Activated CD4-positive, alpha-beta memory T cell treated with anti-CD3 and anti-CD28 coated beads for 36 hours (primary cell): ENCODE measurements at regions of chr9 and their contacts with region 1.

Region 1: GRCh38 chr9:101566904-101567724 is 27.7 kb downstream of the PPP3R2 start:
- DNase-seq: peak; percentile 58
- H3K4me3 Mint-ChIP-seq: no peak overlapping the region
- H3K27ac Mint-ChIP-seq: no peak overlapping the region
- H3K4me1 Mint-ChIP-seq: peaks cover 52% of the 10 kb centered on the region
- H3K27me3 Mint-ChIP-seq: no peaks in the 10 kb centered on the region

Region 2: DNA sequence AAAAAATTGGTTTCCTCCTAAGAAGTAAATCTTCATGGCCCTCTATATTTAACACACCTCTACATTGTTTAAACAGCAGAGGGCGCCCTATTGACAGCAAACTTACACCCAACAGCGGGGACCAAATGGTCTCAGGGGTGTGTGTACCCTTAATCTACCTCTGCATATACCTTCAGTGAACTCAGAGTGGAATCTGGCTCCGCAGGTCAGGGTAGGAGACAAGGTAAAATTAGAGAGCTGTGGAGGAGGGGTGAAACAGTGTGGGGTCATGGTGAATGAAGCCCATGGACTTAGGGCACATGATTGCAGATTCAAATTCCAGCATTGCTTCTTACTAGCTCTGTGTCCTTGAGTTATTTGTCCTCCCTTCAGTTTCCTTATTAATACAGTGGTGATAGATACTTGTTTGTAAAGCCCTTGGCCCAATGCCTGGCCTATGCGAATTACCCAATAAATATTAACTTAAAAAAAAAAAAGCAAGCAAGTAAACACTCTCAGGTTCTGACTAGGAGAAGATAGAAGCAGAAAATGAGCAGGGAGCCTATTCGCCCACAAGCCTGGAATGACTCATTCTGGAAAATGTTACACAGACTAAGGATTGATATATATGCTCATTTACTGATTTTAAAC is 866.3 kb before region 1 on chr9:
- CTCF ChIA-PET with region 1: no interaction called
- POLR2A ChIA-PET with region 1: no interaction called
- intact Hi-C with region 1: no loop called
- DNase-seq: no peak
- H3K4me3 Mint-ChIP-seq: no peak overlapping the region
- H3K27ac Mint-ChIP-seq: no peak overlapping the region
- H3K4me1 Mint-ChIP-seq: no peaks in the 10 kb centered on the region
- H3K27me3 Mint-ChIP-seq: no peaks in the 10 kb centered on the region

Region 3: GRCh38 chr9:101458955-101459631 is 108.0 kb before region 1 on chr9:
- CTCF ChIA-PET with region 1: interaction called, 4 read pairs
- POLR2A ChIA-PET with region 1: no interaction called
- intact Hi-C with region 1: loop called (anchors 2 kb)
- DNase-seq: no peak
- H3K4me3 Mint-ChIP-seq: no peak overlapping the region
- H3K27ac Mint-ChIP-seq: no peak overlapping the region
- H3K4me1 Mint-ChIP-seq: no peaks in the 10 kb centered on the region
- H3K27me3 Mint-ChIP-seq: peaks cover 7% of the 10 kb centered on the region

Region 4: DNA sequence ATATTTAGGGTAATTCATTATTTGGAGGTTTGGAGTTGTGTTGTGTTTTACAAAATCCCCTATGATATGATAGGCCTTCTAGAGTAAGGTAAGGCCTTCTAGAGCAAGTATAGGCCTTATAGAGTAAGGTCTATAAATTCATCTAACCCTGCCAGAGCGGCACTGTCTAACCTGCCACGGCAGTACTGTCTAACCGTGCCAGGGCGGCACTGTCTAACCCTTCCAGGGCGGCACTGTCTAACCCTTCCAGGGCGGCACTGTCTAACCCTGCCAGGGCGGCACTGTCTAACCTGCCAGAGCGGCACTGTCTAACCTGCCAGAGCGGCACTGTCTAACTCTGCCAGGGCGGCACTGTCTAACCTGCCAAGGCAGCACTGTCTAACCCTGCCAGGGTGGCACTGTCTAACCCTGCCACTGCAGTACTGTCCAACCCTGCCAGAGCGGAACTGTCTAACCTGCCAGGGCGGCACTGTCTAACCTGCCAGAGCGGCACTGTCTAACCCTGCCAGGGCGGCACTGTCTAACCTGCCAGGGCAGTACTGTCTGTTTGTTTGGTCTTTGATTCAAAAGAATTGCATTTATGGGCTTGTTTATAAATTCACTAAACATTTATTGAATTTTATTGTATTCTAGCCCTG is 23.9 kb before region 1 on chr9:
- CTCF ChIA-PET with region 1: no interaction called
- POLR2A ChIA-PET with region 1: no interaction called
- intact Hi-C with region 1: no loop called
- DNase-seq: no peak
- H3K4me3 Mint-ChIP-seq: no peak overlapping the region
- H3K27ac Mint-ChIP-seq: no peak overlapping the region
- H3K4me1 Mint-ChIP-seq: no peaks in the 10 kb centered on the region
- H3K27me3 Mint-ChIP-seq: no peaks in the 10 kb centered on the region

Region 5: GRCh38 chr9:101586651-101587050 is 19.5 kb after region 1 on chr9:
- CTCF ChIA-PET with region 1: no interaction called
- POLR2A ChIA-PET with region 1: no interaction called
- intact Hi-C with region 1: loop called (anchors 2 kb)
- DNase-seq: peak; percentile 31
- H3K4me3 Mint-ChIP-seq: no peak overlapping the region
- H3K27ac Mint-ChIP-seq: no peak overlapping the region
- H3K4me1 Mint-ChIP-seq: peaks cover 11% of the 10 kb centered on the region
- H3K27me3 Mint-ChIP-seq: no peaks in the 10 kb centered on the region

Region 6: DNA sequence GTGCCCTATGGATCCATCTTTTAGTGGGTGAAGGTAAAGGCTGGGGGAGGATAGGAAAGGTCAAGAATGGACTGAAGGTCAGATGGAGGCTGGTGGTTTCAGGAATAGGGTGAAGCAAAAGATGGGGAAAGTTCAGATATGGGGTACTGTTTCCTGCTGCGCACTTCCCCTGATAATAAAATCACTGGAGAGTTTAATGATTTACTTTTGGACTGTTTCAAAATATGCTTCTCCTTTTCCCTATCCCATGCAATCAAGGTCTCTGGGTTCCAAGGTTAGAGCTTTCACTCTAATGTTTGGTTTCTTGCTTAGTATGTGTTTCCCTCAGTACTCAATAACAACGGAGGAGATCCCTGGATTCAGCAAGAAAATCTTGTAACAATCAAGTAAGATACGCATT is 38.4 kb after region 1 on chr9:
- CTCF ChIA-PET with region 1: no interaction called
- POLR2A ChIA-PET with region 1: no interaction called
- intact Hi-C with region 1: no loop called
- DNase-seq: no peak
- H3K4me3 Mint-ChIP-seq: no peak overlapping the region
- H3K27ac Mint-ChIP-seq: no peak overlapping the region
- H3K4me1 Mint-ChIP-seq: no peaks in the 10 kb centered on the region
- H3K27me3 Mint-ChIP-seq: peaks cover 4% of the 10 kb centered on the region

Region 7: GRCh38 chr9:101628173-101628572 is 61.1 kb after region 1 on chr9:
- CTCF ChIA-PET with region 1: no interaction called
- POLR2A ChIA-PET with region 1: no interaction called
- intact Hi-C with region 1: no loop called
- DNase-seq: no peak
- H3K4me3 Mint-ChIP-seq: no peak overlapping the region
- H3K27ac Mint-ChIP-seq: no peak overlapping the region
- H3K4me1 Mint-ChIP-seq: peaks cover 3% of the 10 kb centered on the region
- H3K27me3 Mint-ChIP-seq: peaks cover 2% of the 10 kb centered on the region